ENCODE measurements at regions of chr7 and their contacts with region 1.

Region 1: GRCh38 chr7:121730869-121731268 is 142.1 kb upstream of the PTPRZ1 start:
- DNase-seq: no peak
- ATAC-seq: no peak
- H3K4me3 ChIP-seq: no peak overlapping the region
- H3K27ac ChIP-seq: no peak overlapping the region
- H3K4me1 ChIP-seq: no peaks in the 10 kb centered on the region
- H3K27me3 ChIP-seq: no peaks in the 10 kb centered on the region
- CTCF ChIP-seq: no peak
- EP300 ChIP-seq: no peak
- POLR2A ChIP-seq: no peak
- RAD21 ChIP-seq: no peak

Region 2: GRCh38 chr7:121113288-121113687 is 617.6 kb before region 1 on chr7:
- CTCF ChIA-PET with region 1: no interaction called
- POLR2A ChIA-PET with region 1: no interaction called
- RAD21 ChIA-PET with region 1: no interaction called
- SMC1A ChIA-PET with region 1: no interaction called
- in situ Hi-C with region 1: no loop called
- intact Hi-C with region 1: loop called (anchors 10 kb)
- DNase-seq: no peak
- ATAC-seq: no peak
- H3K4me3 ChIP-seq: no peak overlapping the region
- H3K27ac ChIP-seq: no peak overlapping the region
- H3K4me1 ChIP-seq: no peaks in the 10 kb centered on the region
- H3K27me3 ChIP-seq: no peaks in the 10 kb centered on the region; a peak in 1 of 4 replicates
- CTCF ChIP-seq: no peak
- EP300 ChIP-seq: no peak
- POLR2A ChIP-seq: no peak
- RAD21 ChIP-seq: no peak

Measured in GM12878 (cell line).